Caco-2 (cell line): ENCODE measurements at regions of chr11 and their contacts with region 1.

Region 1: DNA sequence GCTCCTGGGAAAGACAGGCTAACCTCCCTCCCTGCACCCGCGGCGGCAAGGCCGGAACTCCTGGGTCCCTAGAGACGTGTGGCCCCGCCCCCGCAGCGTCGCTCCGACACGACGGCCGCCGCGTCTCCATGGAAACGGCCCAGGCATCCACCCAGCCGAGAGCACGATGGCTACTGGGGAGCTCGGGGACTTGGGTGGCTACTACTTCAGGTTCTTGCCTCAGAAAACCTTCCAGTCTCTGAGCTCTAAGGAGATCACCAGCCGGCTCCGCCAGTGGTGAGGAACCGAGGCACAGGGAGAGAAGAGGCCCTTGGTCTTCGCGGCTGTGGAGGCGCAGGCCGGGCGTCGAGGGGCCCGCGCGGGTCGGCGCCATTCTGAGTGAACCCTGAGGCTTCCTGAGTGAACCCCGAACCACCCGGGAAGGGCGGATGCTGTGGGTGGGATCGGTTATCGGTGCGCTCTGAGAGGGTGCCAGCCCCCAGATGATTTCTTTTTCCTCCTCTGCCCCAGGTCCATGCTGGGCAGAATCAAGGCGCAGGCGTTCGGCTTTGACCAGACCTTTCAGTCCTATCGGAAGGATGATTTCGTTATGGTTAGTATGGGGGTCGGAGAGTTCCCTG is at the start of gene CFAP300:
- DNase-seq: peak; percentile 92 to 94
- H3K4me3 ChIP-seq: peak within 1 kb of the TSS; percentile 66
- H3K4me3 Mint-ChIP-seq: peak within 1 kb of the TSS; percentile 93
- H3K27ac Mint-ChIP-seq: peak within 1 kb of the TSS; percentile 95
- H3K4me1 ChIP-seq: no peaks in the 10 kb centered on the region
- H3K4me1 Mint-ChIP-seq: peaks cover 12% of the 10 kb centered on the region
- H3K27me3 ChIP-seq: no peaks in the 10 kb centered on the region
- H3K27me3 Mint-ChIP-seq: no peaks in the 10 kb centered on the region
- CTCF ChIP-seq: no peak
- total RNA-seq, gene CFAP300: 2.2 and 3.9 TPM in 2 replicates

Region 2: GRCh38 chr11:102115557-102115956 is 68.1 kb after region 1 on chr11:
- CTCF ChIA-PET with region 1: interaction called, 3 read pairs
- POLR2A ChIA-PET with region 1: no interaction called
- intact Hi-C with region 1: loop called (anchors 2 kb)
- DNase-seq: peak; percentile 78 to 84
- H3K4me3 ChIP-seq: no peak overlapping the region
- H3K4me3 Mint-ChIP-seq: peak overlapping the region; percentile 31
- H3K27ac Mint-ChIP-seq: peak overlapping the region; percentile 31
- H3K4me1 ChIP-seq: peaks cover 69% of the 10 kb centered on the region
- H3K4me1 Mint-ChIP-seq: peaks cover 54% of the 10 kb centered on the region
- H3K27me3 ChIP-seq: no peaks in the 10 kb centered on the region
- H3K27me3 Mint-ChIP-seq: no peaks in the 10 kb centered on the region
- CTCF ChIP-seq: no peak